ENCODE measurements at regions of chr1 and their contacts with region 1.

Region 1: GRCh38 chr1:29062157-29062942 is 61.4 kb downstream of the TMEM200B start:
- DNase-seq: no peak
- ATAC-seq: no peak

Region 2: DNA sequence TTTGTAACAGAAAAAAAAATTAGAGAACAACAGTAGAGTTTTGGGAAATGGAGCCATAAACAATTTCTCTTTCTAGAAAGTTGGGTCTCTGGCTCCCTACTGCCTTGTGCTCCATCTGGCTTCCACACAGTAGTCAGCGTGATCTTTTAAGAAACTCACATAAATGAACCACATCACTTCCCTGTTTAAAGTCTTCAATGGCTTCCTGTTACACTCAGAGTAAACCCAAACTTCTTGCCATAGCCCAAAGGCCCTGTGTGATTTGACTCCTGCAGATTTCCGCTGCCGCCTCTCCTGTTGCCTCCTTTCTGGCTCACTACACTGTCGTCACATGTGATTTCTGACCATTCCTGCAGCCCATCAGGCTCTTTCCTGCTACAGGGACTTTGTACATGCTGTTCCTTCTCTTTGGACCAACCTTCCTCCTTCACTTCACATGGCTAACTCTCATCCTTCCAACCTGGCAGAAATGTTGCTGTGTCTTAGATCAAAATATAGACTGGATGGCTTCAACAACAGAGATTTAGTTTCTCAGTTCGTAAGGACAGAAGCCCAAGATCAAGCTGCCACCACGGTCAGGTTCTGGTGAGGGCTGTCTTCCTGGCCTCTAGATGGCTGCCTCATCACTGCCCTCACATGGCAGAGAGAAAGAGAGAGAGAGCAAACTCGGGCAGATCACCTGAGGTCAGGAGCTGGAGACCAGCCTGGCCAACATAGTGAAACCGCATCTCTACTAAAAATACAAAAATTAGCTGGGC is 216.4 kb before region 1 on chr1:
- intact Hi-C with region 1: no loop called
- DNase-seq: no peak
- ATAC-seq: no peak

Region 3: GRCh38 chr1:28865997-28866650 is 196.2 kb before region 1 on chr1:
- intact Hi-C with region 1: no loop called
- DNase-seq: no peak
- ATAC-seq: no peak

Region 4: DNA sequence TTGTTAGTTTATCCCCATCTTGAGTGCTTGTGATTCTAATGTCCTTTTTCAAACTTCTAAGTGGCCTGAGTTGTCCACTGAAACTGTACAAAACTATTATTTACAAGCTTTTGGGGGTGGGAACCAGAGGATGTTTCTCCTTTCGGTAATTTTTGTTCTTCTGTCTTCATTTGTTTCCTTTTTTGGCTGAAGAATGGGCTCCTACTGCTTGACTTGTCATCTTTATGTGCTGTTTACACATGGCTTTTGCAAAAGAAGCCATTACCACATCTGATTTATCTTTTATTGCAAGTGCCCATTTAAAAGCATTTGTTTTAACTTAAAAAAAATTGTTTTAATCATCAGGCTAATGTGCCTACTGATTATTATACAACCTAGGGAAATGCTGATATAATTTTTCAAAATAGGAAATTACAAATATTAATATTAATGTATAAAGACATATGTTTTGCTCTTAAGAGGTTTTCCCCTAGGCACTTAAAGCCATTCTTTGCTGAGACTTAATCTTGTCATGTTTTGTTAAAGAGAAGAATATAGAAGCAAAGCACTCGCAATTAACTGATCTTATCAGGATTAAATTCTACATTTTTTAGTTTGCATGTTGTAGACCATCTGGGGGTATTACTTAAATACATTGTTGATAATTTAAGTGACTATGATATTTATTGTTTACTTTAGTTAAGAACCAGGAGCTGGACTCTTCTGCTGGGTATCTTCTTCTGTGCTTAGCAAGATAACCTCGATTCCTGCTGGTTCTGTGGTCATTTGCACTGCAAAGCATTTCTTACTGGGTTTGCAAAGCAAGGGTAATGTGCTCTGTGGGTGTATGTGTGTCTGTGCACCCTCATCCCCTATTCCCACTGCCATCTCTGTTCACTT is 21.2 kb after region 1 on chr1:
- intact Hi-C with region 1: loop called (anchors 1 kb)
- DNase-seq: no peak
- ATAC-seq: no peak

Region 5: GRCh38 chr1:29120961-29121485 is 58.7 kb after region 1 on chr1:
- intact Hi-C with region 1: no loop called
- DNase-seq: no peak
- ATAC-seq: no peak

Measured in Right ventricle myocardium inferior (tissue), 1 donor.